ENCODE measurements at regions of chr18 and their contacts with region 1.

Region 1: GRCh38 chr18:48293954-48294898 is 115.0 kb downstream of the ZBTB7C start:
- DNase-seq: no peak
- ATAC-seq: no peak
- H3K4me3 ChIP-seq: no peak overlapping the region
- H3K27ac ChIP-seq: no peak overlapping the region
- H3K4me1 ChIP-seq: no peaks in the 10 kb centered on the region
- H3K27me3 ChIP-seq: no peaks in the 10 kb centered on the region; the same call in 1 of the 2 replicates
- CTCF ChIP-seq: no peak

Region 2: DNA sequence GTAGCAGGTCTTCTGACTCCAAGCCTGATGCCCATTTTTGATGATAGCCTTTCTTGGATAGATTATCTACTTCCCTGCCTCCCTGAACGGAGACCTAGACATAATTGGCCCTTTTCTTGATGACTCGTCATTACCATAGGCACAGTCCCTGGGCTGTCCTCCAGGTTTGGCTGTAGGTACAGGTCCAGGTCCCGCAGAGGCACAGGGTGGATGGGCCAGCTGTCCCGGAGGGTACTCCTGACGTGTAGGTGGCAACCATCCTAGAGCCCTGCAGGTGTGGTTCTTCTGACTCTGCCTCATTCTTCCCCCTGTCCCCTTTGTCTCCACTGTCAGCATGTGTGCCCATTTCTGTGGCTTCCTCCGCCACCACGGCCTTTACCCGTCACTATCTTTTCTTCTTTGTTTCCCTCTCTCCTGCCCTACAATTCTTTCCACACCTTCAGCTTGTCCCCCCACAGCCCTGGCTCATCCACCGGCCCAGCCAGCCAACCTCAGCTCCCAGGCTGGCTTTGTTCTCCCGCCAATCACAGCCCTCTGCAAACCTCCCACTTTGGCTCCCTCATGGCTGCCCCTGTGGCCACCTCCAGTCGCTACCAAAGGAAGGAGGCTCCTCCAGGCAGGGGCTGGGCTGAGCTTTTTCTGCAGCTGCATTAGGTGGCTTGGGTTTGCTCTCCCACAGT is 553.7 kb after region 1 on chr18:
- CTCF ChIA-PET with region 1: no interaction called
- POLR2A ChIA-PET with region 1: interaction called, 11 read pairs
- in situ Hi-C with region 1: no loop called
- intact Hi-C with region 1: no loop called
- DNase-seq: no peak
- ATAC-seq: 0 out of 2 replicates have a peak, but pooled peaks have one; percentile 20
- H3K4me3 ChIP-seq: no peak overlapping the region
- H3K27ac ChIP-seq: 0 out of 2 replicates have a peak overlapping the region, but pooled peaks have one; percentile 3
- H3K4me1 ChIP-seq: peaks cover 14% of the 10 kb centered on the region
- H3K27me3 ChIP-seq: no peaks in the 10 kb centered on the region
- CTCF ChIP-seq: no peak